GM18951 (cell line): ENCODE measurements at regions of chr7 and their contacts with region 1.

Region 1: GRCh38 chr7:48089046-48090003 is at the start of gene UPP1:
- POLR2A ChIP-seq: peak; percentile 68

Region 2: GRCh38 chr7:47932016-47932415 is 157.3 kb before region 1 on chr7:
- in situ Hi-C with region 1: no loop called
- POLR2A ChIP-seq: no peak

Region 3: GRCh38 chr7:47991741-47992311 is 97.5 kb before region 1 on chr7:
- in situ Hi-C with region 1: loop called (anchors 5 kb)
- POLR2A ChIP-seq: peak; percentile 65